Caco-2 (cell line): ENCODE measurements at regions of chr21 and their contacts with region 1.

Region 1: DNA sequence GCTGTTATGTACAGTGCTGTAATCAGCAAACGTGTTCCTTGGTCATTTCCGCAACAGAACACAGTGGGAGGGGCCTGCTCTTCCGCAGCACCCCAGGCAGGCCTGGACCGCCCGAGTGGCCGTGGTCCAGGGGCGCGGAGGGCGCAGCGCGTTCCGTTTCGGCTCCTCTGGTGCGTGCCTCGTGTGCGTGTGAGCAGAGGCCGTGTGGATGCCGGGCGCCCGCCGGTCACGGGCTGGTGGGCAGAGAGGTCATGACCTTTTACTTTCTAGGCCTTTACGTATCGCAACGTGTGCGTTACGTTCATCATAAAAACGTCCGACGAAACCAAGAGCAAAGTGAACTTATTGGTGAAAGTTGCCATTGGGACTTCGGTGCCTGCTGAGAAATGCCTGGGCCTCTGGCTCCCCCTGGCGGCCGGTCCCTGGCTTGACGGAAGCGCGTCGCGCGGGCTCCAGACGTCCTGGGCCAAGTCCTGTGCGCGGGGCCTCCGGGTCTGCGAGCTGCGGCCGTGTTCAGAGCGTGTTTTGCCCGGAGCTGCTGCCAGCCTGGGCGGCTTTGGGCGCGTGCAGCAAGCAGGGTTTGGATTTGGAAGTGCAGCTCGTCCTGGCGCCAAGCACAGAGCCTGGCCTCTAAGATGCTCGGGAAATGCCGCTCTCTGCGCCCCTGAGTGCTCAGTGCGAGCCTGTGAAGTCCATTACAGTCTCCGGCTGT is 34.4 kb downstream of the COL18A1 start:
- DNase-seq: peak; percentile 67 to 82
- H3K4me3 ChIP-seq: no peak overlapping the region
- H3K4me3 Mint-ChIP-seq: no peak overlapping the region
- H3K27ac Mint-ChIP-seq: peak overlapping the region; percentile 29
- H3K4me1 ChIP-seq: peaks cover 6% of the 10 kb centered on the region
- H3K4me1 Mint-ChIP-seq: peaks cover 13% of the 10 kb centered on the region
- H3K27me3 ChIP-seq: no peaks in the 10 kb centered on the region
- H3K27me3 Mint-ChIP-seq: no peaks in the 10 kb centered on the region
- CTCF ChIP-seq: peak; percentile 86 to 91

Region 2: DNA sequence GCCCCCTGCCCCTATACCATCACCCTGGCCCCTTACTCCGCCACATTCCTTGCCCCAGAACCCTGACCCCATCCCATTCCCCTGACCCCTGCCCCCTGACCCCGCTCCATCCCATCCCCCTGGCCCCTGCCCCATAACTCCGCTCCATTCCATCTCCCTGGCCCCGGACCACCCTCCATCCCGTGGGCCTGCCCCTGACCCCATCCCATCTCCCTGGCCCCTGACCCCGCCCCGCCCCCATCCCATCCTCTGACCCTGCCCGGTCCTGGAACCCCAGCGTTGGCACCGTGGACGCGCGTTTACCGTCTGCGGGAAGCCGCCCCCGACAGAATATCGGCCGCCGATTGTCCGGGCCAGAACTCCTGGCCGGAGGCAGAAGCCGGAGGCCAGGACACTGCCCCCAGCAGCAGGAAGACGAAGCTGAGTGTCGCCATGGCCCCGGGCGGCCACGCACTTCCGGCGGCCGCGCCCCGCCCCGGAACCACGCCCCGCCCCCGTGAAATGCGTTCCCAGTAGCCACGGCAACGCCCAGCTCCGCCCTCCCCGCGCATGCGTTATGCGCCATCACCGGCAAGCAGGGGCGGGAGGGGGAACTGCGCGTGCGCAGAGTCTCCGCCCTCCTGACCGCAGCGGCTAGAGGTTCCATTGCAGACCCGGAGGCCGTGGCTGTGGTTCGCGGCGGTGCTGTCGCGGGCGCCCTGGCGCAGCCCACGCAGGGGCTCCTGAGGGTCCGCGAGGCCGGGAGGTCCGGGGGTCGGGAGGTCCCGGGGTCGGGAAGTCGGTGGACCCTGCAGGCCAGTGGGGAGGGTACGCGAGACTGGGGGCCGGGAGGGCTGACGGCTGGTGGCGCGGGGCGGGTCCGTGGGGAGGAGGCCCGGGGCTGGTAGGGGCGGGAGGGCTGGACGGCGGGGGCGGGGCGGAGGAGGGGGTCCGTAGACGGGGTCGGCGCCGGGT is 151.6 kb before region 1 on chr21 and contains the start of gene POFUT2:
- CTCF ChIA-PET with region 1: interaction called, 6 read pairs
- POLR2A ChIA-PET with region 1: no interaction called
- intact Hi-C with region 1: loop called (anchors 1 kb)
- DNase-seq: peak; percentile 96 to 98
- H3K4me3 ChIP-seq: peak within 1 kb of the TSS; percentile 91
- H3K4me3 Mint-ChIP-seq: peak within 1 kb of the TSS; percentile 72
- H3K27ac Mint-ChIP-seq: peak within 1 kb of the TSS; percentile 66
- H3K4me1 ChIP-seq: peaks cover 9% of the 10 kb centered on the region
- H3K4me1 Mint-ChIP-seq: peaks cover 6% of the 10 kb centered on the region
- H3K27me3 ChIP-seq: no peaks in the 10 kb centered on the region
- H3K27me3 Mint-ChIP-seq: no peaks in the 10 kb centered on the region
- CTCF ChIP-seq: no peak
- total RNA-seq, gene POFUT2: 32.0 and 36.5 TPM in 2 replicates

Region 3: GRCh38 chr21:45336870-45337269 is 102.4 kb before region 1 on chr21:
- CTCF ChIA-PET with region 1: interaction called, 3 read pairs
- POLR2A ChIA-PET with region 1: no interaction called
- intact Hi-C with region 1: loop called (anchors 5 kb)
- DNase-seq: peak; percentile 65 to 66
- H3K4me3 ChIP-seq: no peak overlapping the region
- H3K4me3 Mint-ChIP-seq: no peak overlapping the region
- H3K27ac Mint-ChIP-seq: peak overlapping the region; percentile 81
- H3K4me1 ChIP-seq: peaks cover 48% of the 10 kb centered on the region
- H3K4me1 Mint-ChIP-seq: peaks cover 35% of the 10 kb centered on the region
- H3K27me3 ChIP-seq: no peaks in the 10 kb centered on the region
- H3K27me3 Mint-ChIP-seq: no peaks in the 10 kb centered on the region
- CTCF ChIP-seq: peak in 1 of 2 experiments; percentile 1

Region 4: DNA sequence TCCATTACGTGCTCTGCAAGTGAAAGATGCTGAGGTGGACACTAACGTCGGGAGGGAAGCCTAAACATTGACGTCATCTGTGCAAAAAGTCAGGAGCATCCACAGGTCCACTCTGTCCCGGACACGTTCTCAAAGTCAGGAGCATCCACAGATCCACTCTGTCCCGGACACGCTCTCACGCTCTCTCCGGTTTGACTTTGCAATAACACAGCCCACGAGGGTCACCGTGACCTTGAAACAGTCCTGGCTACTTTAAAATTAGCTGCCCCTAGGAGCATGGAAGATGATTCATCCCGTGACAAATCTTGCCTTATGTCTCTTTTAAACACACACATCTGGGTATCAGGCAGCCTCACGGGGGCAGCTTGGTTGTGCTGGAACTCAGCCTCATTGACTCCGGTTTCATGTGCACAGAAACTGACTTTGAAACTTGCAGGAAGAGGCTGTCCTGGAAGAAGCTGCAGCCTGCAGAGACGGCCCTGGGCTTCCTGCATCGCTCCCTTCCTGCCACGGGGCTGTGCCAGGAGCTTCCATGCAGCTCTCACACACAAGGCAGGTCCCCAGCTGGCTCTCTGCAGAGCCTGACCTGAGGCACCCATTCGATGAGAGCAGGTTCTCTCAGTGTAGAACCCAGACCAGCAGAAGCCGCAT is 52.5 kb before region 1 on chr21:
- CTCF ChIA-PET with region 1: no interaction called
- POLR2A ChIA-PET with region 1: no interaction called
- intact Hi-C with region 1: loop called (anchors 10 kb)
- DNase-seq: peak in 1 of 2 experiments; percentile 30
- H3K4me3 ChIP-seq: no peak overlapping the region
- H3K4me3 Mint-ChIP-seq: no peak overlapping the region
- H3K27ac Mint-ChIP-seq: peak overlapping the region; percentile 66
- H3K4me1 ChIP-seq: peaks cover 24% of the 10 kb centered on the region
- H3K4me1 Mint-ChIP-seq: no peaks in the 10 kb centered on the region
- H3K27me3 ChIP-seq: no peaks in the 10 kb centered on the region
- H3K27me3 Mint-ChIP-seq: no peaks in the 10 kb centered on the region
- CTCF ChIP-seq: no peak

Region 5: GRCh38 chr21:45404730-45405270 is 34.5 kb before region 1 on chr21 and contains the start of gene COL18A1:
- CTCF ChIA-PET with region 1: no interaction called
- POLR2A ChIA-PET with region 1: no interaction called
- intact Hi-C with region 1: loop called (anchors 2 kb)
- DNase-seq: peak; percentile 75 to 81
- H3K4me3 ChIP-seq: peak within 1 kb of the TSS; percentile 78
- H3K4me3 Mint-ChIP-seq: peak within 1 kb of the TSS; percentile 76
- H3K27ac Mint-ChIP-seq: peak within 1 kb of the TSS; percentile 57
- H3K4me1 ChIP-seq: peaks cover 44% of the 10 kb centered on the region
- H3K4me1 Mint-ChIP-seq: peaks cover 21% of the 10 kb centered on the region
- H3K27me3 ChIP-seq: no peaks in the 10 kb centered on the region
- H3K27me3 Mint-ChIP-seq: no peaks in the 10 kb centered on the region
- CTCF ChIP-seq: no peak
- total RNA-seq, gene COL18A1: 160 and 170 TPM in 2 replicates